ENCODE measurements at regions of chr5 and their contacts with region 1.

Region 1: DNA sequence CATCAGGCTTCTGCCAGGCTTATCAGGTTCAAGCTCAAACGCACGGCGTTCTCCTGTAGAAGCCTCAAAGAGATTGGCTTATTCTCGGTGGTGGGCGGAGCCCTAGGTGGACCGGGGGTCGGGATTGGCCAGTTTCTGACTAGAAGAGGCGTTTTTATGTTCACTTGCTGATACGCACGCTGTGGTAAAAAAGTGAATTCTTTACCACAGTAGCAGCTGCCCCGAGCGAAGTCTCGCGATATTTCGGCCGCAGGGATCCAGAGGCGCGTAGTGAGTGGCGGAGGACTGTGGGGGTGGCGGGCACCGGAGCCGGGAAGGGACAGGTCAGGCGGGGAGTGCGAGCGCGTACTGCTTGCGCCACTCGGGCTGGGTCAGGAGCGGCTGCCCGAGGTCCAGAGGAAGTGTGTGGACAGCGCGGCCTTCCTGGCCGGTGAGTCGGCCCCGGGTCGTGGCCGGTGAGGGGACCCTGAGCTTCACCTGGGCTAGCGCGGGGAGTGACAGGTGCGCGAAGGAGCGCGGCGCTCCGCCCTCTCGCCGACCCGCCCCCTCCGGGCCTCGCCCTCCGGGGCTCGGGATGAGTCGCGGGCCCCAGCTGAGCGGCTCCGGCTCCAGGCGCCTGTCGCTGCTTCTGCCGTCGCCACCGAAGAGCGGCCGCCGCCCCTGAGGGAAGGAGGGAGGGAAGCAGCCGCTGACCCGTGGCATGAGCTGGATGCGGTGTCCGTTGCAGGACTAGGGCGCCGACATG is at the start of gene DMXL1:
- DNase-seq: peak; percentile 99 to 100
- H3K4me3 ChIP-seq: peak within 1 kb of the TSS; percentile 69 to 97
- H3K27ac ChIP-seq: peak within 1 kb of the TSS; percentile 96 to 99
- H3K4me1 ChIP-seq: peaks cover 0 to 26% of the 10 kb centered on the region in 2 donors
- H3K27me3 ChIP-seq: no peaks in the 10 kb centered on the region
- CTCF ChIP-seq: no peak
- total RNA-seq, gene DMXL1: 136 TPM

Region 2: DNA sequence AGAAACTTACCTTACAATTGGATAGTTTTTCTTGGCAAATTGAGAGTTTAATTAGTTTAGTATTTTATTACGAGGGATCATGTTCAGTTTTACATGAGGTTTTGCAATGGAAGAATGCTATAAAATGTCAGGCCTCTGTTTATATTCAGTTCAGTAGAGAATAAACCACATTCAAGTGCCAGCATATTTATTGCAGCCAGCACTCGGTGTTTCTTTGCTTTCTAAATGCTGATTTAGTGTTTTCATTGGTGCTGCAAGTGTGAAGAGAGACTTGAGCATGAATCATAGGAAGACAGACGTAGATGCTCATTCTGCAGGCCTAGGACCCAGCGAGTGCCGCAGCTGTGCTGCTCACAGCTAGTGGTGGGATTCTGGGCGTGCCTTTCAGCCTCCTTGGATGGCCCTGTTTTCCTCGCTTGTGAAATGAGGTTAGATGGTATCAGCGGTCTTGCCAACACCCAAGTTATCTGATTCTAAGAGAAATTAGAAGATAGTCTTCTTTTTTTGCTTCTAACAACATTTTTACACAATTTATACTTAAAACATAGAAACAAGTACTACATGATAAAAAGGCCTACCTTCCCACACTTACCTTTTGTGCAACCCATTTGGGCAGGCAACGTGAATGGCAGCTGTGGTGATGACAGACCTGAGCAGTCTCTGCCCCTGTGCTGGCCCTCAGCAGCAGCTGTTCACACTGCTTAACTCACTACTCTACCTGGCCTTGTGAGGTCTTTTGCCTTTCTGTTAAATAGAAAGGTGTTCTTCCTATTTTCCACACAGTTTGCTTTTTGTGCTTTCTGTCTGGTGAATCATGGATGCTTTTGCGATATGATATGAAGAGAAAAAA is 258.0 kb after region 1 on chr5:
- intact Hi-C with region 1: loop called (anchors 2 kb)
- DNase-seq: no peak
- H3K4me3 ChIP-seq: no peak overlapping the region
- H3K27ac ChIP-seq: peak overlapping the region; percentile 20 to 22
- H3K4me1 ChIP-seq: peaks cover 0 to 10% of the 10 kb centered on the region in 2 donors
- H3K27me3 ChIP-seq: no peaks in the 10 kb centered on the region
- CTCF ChIP-seq: no peak

Region 3: DNA sequence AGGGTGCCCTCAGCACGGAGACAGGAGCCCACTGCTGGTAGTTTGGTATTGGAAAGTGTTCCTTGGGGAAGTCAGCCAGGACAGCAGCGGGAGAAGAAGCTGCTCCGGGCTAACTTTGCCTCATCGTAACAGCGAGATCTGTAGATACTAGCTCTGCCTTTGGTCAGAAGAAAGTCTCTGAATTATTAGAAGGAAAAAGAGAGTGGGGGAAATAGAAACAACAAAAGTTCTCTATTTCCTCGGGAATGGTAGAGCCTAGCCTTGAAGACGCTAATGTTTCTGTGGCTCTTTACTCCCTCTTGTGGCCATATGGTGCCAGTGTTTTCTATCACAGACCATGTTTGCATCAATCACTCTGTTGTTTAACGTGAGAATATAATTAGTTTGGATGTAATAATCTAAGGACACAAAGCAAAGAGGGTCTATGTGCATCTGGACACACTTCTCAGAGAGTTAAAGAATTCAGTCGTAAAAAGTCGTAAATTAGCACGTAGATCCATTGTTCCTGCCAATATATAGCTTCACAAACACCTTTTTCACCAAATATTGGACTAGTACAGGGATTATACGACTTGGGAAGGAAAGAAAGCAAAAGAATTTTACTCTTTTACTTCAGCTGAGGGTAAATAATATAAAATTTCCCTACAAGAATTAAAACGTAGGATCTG is 341.1 kb after region 1 on chr5:
- intact Hi-C with region 1: loop called (anchors 5 kb)
- DNase-seq: peak in 1 of 2 donors; percentile 76
- H3K4me3 ChIP-seq: peak overlapping the region; percentile 50 to 67
- H3K27ac ChIP-seq: peak overlapping the region; percentile 72 to 83
- H3K4me1 ChIP-seq: no peaks in the 10 kb centered on the region
- H3K27me3 ChIP-seq: no peaks in the 10 kb centered on the region
- CTCF ChIP-seq: peak; percentile 82 to 91 (median 86)

Region 4: DNA sequence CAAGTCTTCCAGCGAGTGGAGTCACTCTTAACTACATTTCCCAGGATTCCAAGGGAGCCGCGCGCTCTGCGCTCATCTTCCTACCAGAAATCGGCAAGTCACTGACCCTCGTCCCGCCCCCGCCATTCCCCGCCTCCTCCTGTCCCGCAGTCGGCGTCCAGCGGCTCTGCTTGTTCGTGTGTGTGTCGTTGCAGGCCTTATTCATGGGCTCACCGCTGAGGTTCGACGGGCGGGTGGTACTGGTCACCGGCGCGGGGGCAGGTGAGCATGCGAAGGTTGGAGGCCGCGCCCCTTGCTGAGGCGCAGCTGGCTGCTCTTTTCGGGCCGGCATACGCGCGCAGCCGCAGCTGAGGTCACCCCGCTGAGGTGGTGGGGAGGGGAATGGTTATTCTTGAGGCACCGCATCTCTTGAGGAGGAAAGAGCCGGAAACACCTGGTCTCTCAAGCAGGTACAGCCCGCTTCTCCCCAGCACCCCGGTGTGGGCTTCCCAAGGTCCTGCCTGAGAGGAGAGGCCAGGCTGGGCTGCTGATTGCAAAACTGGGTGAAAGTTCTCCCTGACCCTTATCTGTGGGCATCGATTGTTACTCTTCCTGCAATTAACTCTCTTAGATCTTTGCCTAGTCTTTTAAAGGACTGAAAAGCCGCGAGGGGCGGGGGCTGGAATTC is 381.5 kb after region 1 on chr5 and contains the start of gene HSD17B4:
- intact Hi-C with region 1: loop called (anchors 2 kb)
- DNase-seq: peak; percentile 54 to 95
- H3K4me3 ChIP-seq: peak within 1 kb of the TSS; percentile 82 to 92
- H3K27ac ChIP-seq: peak within 1 kb of the TSS; percentile 77 to 91
- H3K4me1 ChIP-seq: peaks cover 0 to 12% of the 10 kb centered on the region in 2 donors
- H3K27me3 ChIP-seq: no peaks in the 10 kb centered on the region
- CTCF ChIP-seq: no peak
- total RNA-seq, gene HSD17B4: 65.0 TPM

Measured in ascending aorta (tissue), 2 donors.